ENCODE measurements at regions of chr3 and their contacts with region 1.

Region 1: DNA sequence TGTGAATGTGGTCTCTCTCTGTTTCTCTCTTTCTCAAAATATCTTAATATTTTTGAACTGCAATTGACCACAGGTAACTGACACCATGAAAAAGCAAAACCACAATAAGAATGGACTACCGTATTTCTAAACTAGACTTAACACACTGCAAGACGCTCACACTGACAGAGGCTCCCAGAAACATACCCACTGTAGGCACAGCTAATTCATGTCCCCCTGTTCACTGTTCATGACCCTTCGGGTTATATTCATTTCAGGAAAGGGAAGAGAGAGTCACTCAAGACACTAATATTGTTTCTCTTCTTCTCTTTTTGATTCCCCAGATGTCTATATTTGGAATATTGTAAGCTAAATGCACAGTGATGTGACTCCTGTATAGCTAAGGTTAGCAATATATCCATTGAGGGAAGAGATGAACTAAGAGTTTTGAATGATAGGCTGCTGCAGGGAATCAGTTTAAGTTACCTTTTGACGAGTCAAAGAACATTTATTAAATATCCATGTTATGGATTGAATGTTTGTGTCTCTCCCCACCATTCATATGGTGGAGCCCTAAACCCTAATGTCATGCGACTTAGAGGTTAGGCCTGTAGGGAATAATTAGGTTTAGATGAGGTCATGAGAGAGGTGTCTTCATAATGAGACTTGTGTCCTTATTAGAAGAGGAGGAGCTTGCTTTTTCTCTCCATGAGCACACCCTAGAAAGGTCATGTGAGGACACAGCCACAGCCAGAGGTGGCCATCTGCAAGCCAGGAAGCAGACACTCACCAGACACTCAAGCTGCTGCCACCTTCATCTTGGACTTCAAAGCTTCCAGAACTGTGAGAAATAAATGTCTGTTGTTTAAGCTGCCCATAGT is 216.6 kb upstream of the GRM7 start:
- DNase-seq: peak; percentile 25
- ATAC-seq: peak; percentile 87
- H3K4me3 ChIP-seq: no peak overlapping the region
- H3K27ac ChIP-seq: no peak overlapping the region
- H3K4me1 ChIP-seq: no peaks in the 10 kb centered on the region
- H3K27me3 ChIP-seq: no peaks in the 10 kb centered on the region
- CTCF ChIP-seq: no peak
- EP300 ChIP-seq: no peak
- POLR2A ChIP-seq: no peak
- RAD21 ChIP-seq: 0 out of 2 replicates have a peak, but pooled peaks have one; percentile 3

Region 2: GRCh38 chr3:6491768-6492167 is 152.5 kb before region 1 on chr3:
- CTCF ChIA-PET with region 1: no interaction called
- POLR2A ChIA-PET with region 1: no interaction called
- RAD21 ChIA-PET with region 1: no interaction called
- SMC1A ChIA-PET with region 1: no interaction called
- in situ Hi-C with region 1: no loop called
- intact Hi-C with region 1: loop called (anchors 5 kb)
- DNase-seq: no peak
- ATAC-seq: no peak
- H3K4me3 ChIP-seq: no peak overlapping the region
- H3K27ac ChIP-seq: no peak overlapping the region
- H3K4me1 ChIP-seq: no peaks in the 10 kb centered on the region
- H3K27me3 ChIP-seq: no peaks in the 10 kb centered on the region
- CTCF ChIP-seq: no peak
- EP300 ChIP-seq: no peak
- POLR2A ChIP-seq: no peak
- RAD21 ChIP-seq: no peak

Region 3: DNA sequence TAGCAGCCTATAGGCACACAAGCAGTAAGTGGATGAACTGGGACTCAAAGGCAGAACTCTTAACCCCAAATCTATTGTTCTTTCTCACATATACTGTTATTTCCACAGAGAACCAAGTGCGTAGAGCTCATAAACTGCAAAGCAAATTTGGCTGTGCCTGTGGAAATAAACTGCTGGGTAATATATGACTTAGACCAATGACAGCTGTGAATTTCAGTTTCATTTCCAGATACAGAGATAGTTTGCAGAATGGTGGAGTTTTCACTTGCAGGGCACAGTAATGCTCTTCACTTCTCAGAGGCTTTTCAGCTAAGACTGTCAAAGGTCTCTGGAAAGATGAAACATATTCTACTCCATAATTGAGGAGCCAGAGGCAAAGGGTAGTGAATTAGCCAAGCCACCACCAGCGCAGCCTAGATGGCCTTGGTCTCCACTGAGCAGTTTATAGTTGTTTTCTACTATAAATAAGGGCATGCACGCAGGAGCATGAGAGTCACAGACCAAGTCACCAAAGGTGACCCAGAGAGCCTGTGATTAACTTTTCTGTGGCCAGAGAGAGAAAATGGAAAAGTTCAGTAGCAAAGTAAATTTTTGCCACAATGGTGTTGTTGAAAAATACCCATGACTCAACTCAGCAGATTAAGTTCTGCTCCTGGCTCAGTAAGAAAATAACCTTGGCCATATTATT is 36.0 kb after region 1 on chr3:
- CTCF ChIA-PET with region 1: interaction called, 3 read pairs
- POLR2A ChIA-PET with region 1: interaction called, 4 read pairs
- RAD21 ChIA-PET with region 1: interaction called, 13 read pairs
- SMC1A ChIA-PET with region 1: interaction called, 22 read pairs
- in situ Hi-C with region 1: no loop called
- intact Hi-C with region 1: loop called (anchors 1 kb)
- DNase-seq: peak; percentile 51
- ATAC-seq: peak; percentile 93
- H3K4me3 ChIP-seq: no peak overlapping the region
- H3K27ac ChIP-seq: peak overlapping the region; percentile 76
- H3K4me1 ChIP-seq: peaks cover 5% of the 10 kb centered on the region; the same call in 1 of the 2 replicates
- H3K27me3 ChIP-seq: no peaks in the 10 kb centered on the region
- CTCF ChIP-seq: no peak
- EP300 ChIP-seq: peak; percentile 12 to 39; a peak in 2 of 4 replicates
- POLR2A ChIP-seq: no peak
- RAD21 ChIP-seq: 0 out of 2 replicates have a peak, but pooled peaks have one; percentile 17

Region 4: DNA sequence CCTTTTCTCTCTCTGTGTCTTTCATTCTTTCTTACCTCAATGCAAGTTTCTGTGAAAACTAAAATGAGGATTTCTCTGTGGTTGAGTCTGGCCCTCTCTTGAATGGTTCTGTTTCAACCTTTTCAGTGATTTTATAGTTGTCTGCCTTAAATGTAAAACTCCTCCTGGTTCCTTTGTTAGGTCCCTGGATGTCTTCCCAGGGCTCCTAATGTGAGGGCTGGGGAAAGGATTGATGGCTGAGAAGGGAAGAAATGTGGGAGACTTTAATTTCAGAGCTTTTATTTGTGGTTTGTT is 126.0 kb after region 1 on chr3:
- CTCF ChIA-PET with region 1: no interaction called
- POLR2A ChIA-PET with region 1: no interaction called
- RAD21 ChIA-PET with region 1: no interaction called
- SMC1A ChIA-PET with region 1: no interaction called
- in situ Hi-C with region 1: no loop called
- intact Hi-C with region 1: no loop called
- DNase-seq: no peak
- ATAC-seq: no peak
- H3K4me3 ChIP-seq: no peak overlapping the region
- H3K27ac ChIP-seq: no peak overlapping the region
- H3K4me1 ChIP-seq: no peaks in the 10 kb centered on the region
- H3K27me3 ChIP-seq: no peaks in the 10 kb centered on the region
- CTCF ChIP-seq: no peak
- EP300 ChIP-seq: no peak
- POLR2A ChIP-seq: no peak
- RAD21 ChIP-seq: no peak

Measured in GM12878 (cell line).